ENCODE measurements at regions of chr2 and their contacts with region 1.

Region 1: GRCh38 chr2:176491172-176491904 is 222.1 kb downstream of the MTX2 start:
- DNase-seq: peak; percentile 87
- H3K4me3 ChIP-seq: no peak overlapping the region
- H3K27ac ChIP-seq: peak overlapping the region; percentile 33
- H3K4me1 ChIP-seq: peaks cover 39% of the 10 kb centered on the region
- H3K27me3 ChIP-seq: no peaks in the 10 kb centered on the region
- CTCF ChIP-seq: no peak

Region 2: GRCh38 chr2:174748948-174749347 is 1742.4 kb before region 1 on chr2:
- CTCF ChIA-PET with region 1: no interaction called
- POLR2A ChIA-PET with region 1: no interaction called
- intact Hi-C with region 1: no loop called
- DNase-seq: peak; percentile 62
- H3K4me3 ChIP-seq: no peak overlapping the region
- H3K27ac ChIP-seq: no peak overlapping the region
- H3K4me1 ChIP-seq: no peaks in the 10 kb centered on the region
- H3K27me3 ChIP-seq: peaks cover 3% of the 10 kb centered on the region
- CTCF ChIP-seq: peak; percentile 81

Region 3: GRCh38 chr2:176669398-176670174 is 178.2 kb after region 1 on chr2:
- CTCF ChIA-PET with region 1: no interaction called
- POLR2A ChIA-PET with region 1: no interaction called
- intact Hi-C with region 1: no loop called
- DNase-seq: peak; percentile 63
- H3K4me3 ChIP-seq: no peak overlapping the region
- H3K27ac ChIP-seq: peak overlapping the region; percentile 67
- H3K4me1 ChIP-seq: peaks cover 65% of the 10 kb centered on the region
- H3K27me3 ChIP-seq: no peaks in the 10 kb centered on the region
- CTCF ChIP-seq: no peak

Region 4: DNA sequence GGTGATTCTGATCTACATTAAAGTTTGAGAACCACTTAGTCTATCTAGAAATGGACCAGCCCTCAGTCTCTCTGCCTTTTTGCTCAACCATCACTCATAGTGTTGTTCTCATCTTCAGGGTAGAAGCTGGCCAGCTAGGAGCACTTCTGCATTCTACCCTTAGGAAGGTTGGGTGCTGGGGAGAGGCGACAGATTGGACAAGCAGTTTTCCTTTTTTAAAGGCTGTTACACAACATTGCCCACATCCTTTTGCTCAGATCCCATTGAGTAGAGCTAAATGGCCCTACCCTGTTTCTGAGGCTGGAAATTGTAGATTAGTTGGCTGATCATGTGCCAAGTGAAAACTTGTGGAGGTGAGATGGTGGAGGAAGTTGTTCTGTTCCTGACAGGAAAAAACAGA is 1738.6 kb after region 1 on chr2:
- CTCF ChIA-PET with region 1: no interaction called
- POLR2A ChIA-PET with region 1: no interaction called
- intact Hi-C with region 1: loop called (anchors 10 kb)
- DNase-seq: no peak
- H3K4me3 ChIP-seq: no peak overlapping the region
- H3K27ac ChIP-seq: no peak overlapping the region
- H3K4me1 ChIP-seq: peaks cover 3% of the 10 kb centered on the region
- H3K27me3 ChIP-seq: no peaks in the 10 kb centered on the region
- CTCF ChIP-seq: no peak

Measured in A673 (cell line).